Spleen (tissue), 13 donors: ENCODE measurements at regions of chr14 and their contacts with region 1.

Region 1: DNA sequence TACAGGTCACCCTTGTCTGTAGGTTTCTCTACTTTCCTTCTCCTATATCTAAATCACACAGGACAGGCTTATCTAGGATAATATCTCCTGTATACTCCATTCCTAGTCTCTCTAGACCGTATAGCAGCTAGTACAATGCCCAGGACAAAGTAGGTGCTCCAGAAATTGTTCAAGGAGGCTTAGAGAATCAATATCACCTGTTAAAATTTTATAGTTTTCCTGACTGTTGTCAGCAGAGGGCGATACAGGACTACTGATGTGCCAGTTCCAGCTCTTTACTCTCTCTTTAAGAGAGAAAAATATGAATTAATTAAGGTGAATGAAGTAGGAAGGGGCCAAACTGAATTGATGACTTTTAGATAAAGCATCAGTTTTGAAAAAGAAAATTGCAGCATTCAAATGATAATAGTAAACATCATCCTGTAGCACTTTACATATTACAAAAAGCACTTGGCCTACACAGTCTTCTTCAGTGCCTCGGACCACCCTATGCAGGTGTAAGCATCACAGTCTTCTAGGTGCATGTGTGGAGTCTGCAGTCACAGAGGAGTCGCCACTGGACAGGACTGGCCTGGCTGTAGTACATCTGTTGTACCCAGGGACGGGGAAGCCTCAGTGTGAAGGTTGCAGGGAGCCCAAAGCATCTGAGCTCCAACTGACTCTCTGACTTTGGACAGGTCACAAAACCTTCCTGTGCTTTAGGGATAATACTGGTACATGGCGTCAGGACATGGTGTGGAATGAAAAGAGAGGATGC is 61.9 kb upstream of the MAX start:
- DNase-seq: no peak
- H3K4me3 ChIP-seq: no peak overlapping the region
- H3K27ac ChIP-seq: no peak overlapping the region
- H3K4me1 ChIP-seq: peaks cover 0 to 17% (median 4%) of the 10 kb centered on the region in 6 donors
- H3K27me3 ChIP-seq: no peaks in the 10 kb centered on the region
- CTCF ChIP-seq: peak in 10 of 11 experiments; percentile 15 to 64 (median 54)
- POLR2A ChIP-seq: no peak

Region 2: GRCh38 chr14:65824285-65824977 is 660.2 kb after region 1 on chr14:
- intact Hi-C with region 1: loop called (anchors 5 kb)
- DNase-seq: no peak
- H3K4me3 ChIP-seq: no peak overlapping the region
- H3K27ac ChIP-seq: no peak overlapping the region
- H3K4me1 ChIP-seq: peaks cover 0 to 6% (median 2%) of the 10 kb centered on the region in 6 donors
- H3K27me3 ChIP-seq: no peaks in the 10 kb centered on the region
- CTCF ChIP-seq: peak; percentile 82 to 96 (median 92)
- POLR2A ChIP-seq: no peak

Region 3: GRCh38 chr14:66070509-66071319 is 906.5 kb after region 1 on chr14:
- intact Hi-C with region 1: loop called (anchors 10 kb)
- DNase-seq: no peak
- H3K4me3 ChIP-seq: no peak overlapping the region
- H3K27ac ChIP-seq: no peak overlapping the region
- H3K4me1 ChIP-seq: peaks cover 0 to 3% (median 0%) of the 10 kb centered on the region in 6 donors
- H3K27me3 ChIP-seq: no peaks in the 10 kb centered on the region
- CTCF ChIP-seq: peak; percentile 45 to 88 (median 81)
- POLR2A ChIP-seq: no peak